ENCODE measurements at regions of chr4 and their contacts with region 1.

Region 1: DNA sequence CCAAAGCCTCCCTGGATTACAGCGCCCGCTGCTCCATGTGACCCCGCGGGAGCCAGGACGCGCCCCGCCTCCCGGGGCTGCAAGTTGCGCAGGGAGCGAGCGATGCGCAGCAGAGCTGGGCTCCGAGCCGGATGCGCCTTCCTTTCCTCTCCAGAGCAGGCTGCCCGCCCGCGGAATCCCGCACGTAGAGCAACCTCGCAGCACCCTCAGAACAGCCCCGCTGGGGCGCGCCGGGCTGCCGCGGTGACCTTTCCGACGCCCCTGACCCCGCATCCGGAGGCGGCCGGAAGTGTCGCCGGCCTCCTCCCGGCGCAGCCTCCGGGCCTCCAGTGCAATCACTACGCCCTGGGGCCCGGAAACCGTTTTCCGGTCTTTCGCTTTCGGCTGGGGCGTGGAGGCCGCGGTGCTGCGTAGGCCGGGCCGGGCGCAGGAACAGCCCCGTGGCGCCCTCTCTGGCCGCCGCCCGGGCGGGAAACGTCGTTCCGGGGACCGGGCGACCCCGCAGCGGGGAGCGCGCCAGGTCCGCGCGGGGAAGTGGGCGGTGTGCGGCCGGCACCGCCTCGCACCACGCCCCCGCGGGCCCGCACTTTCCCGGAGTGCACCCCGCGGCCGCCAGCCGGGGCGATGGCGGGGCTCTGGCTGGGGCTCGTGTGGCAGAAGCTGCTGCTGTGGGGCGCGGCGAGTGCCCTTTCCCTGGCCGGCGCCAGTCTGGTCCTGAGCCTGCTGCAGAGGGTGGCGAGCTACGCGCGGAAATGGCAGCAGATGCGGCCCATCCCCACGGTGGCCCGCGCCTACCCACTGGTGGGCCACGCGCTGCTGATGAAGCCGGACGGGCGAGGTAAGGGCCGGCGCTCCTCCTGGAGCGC is at the start of gene CYP4V2:
- DNase-seq: peak; percentile 62 to 92 (median 86)
- ATAC-seq: peak; percentile 78 to 81
- H3K4me3 Mint-ChIP-seq: peak within 1 kb of the TSS; percentile 87 to 95 (median 92)
- H3K27ac Mint-ChIP-seq: peak within 1 kb of the TSS; percentile 95 to 98 (median 97)
- H3K4me1 Mint-ChIP-seq: peaks cover 16 to 58% (median 47%) of the 10 kb centered on the region in 4 donors
- H3K27me3 Mint-ChIP-seq: no peaks in the 10 kb centered on the region
- polyA plus RNA-seq, gene CYP4V2: 19.3 to 28.4 (median 22.9) TPM

Region 2: GRCh38 chr4:186201535-186202230 is 10.2 kb after region 1 on chr4:
- POLR2A ChIA-PET with region 1: interaction called, 23 read pairs
- DNase-seq: peak; percentile 15 to 69 (median 46)
- ATAC-seq: peak; percentile 74 to 92
- H3K4me3 Mint-ChIP-seq: peak overlapping the region in 8 of 10 donors; percentile 8 to 61 (median 40)
- H3K27ac Mint-ChIP-seq: peak overlapping the region; percentile 23 to 98 (median 74)
- H3K4me1 Mint-ChIP-seq: peaks cover 11 to 30% (median 20%) of the 10 kb centered on the region in 4 donors
- H3K27me3 Mint-ChIP-seq: no peaks in the 10 kb centered on the region

Measured in naive thymus-derived CD8-positive, alpha-beta T cell (primary cell).